ENCODE measurements at regions of chr2 and their contacts with region 1.

Region 1: GRCh38 chr2:98835831-98836385 is 100.1 kb downstream of the CRACDL start:
- DNase-seq: no peak
- H3K4me3 ChIP-seq: no peak overlapping the region
- H3K27ac ChIP-seq: no peak overlapping the region
- H3K4me1 ChIP-seq: no peaks in the 10 kb centered on the region
- H3K27me3 ChIP-seq: no peaks in the 10 kb centered on the region
- CTCF ChIP-seq: no peak
- POLR2A ChIP-seq: no peak

Region 2: GRCh38 chr2:98649135-98649991 is 186.5 kb before region 1 on chr2:
- intact Hi-C with region 1: loop called (anchors 2 kb)
- DNase-seq: peak; percentile 83
- H3K4me3 ChIP-seq: no peak overlapping the region
- H3K27ac ChIP-seq: no peak overlapping the region
- H3K4me1 ChIP-seq: no peaks in the 10 kb centered on the region
- H3K27me3 ChIP-seq: no peaks in the 10 kb centered on the region
- CTCF ChIP-seq: peak; percentile 92 to 98 (median 97)
- POLR2A ChIP-seq: no peak

Region 3: GRCh38 chr2:98743835-98744234 is 92.1 kb before region 1 on chr2:
- intact Hi-C with region 1: no loop called
- DNase-seq: peak in 1 of 2 donors; percentile 28
- H3K4me3 ChIP-seq: no peak overlapping the region
- H3K27ac ChIP-seq: no peak overlapping the region
- H3K4me1 ChIP-seq: peaks cover 0 to 6% of the 10 kb centered on the region in 2 donors
- H3K27me3 ChIP-seq: no peaks in the 10 kb centered on the region
- CTCF ChIP-seq: no peak
- POLR2A ChIP-seq: no peak